ENCODE measurements at regions of chr5 and their contacts with region 1.

Region 1: GRCh38 chr5:35777358-35778087 is 79.2 kb upstream of the IL7R start:
- DNase-seq: peak; percentile 91
- H3K4me3 ChIP-seq: no peak overlapping the region
- H3K27ac ChIP-seq: no peak overlapping the region
- H3K4me1 ChIP-seq: peaks cover 21% of the 10 kb centered on the region
- CTCF ChIP-seq: peak; percentile 85

Region 2: GRCh38 chr5:35089334-35090314 is 687.9 kb before region 1 on chr5:
- CTCF ChIA-PET with region 1: no interaction called
- POLR2A ChIA-PET with region 1: no interaction called
- intact Hi-C with region 1: loop called (anchors 10 kb)
- DNase-seq: peak; percentile 56
- H3K4me3 ChIP-seq: no peak overlapping the region
- H3K27ac ChIP-seq: no peak overlapping the region
- H3K4me1 ChIP-seq: no peaks in the 10 kb centered on the region
- CTCF ChIP-seq: peak; percentile 86

Region 3: GRCh38 chr5:35651002-35651756 is 126.3 kb before region 1 on chr5:
- CTCF ChIA-PET with region 1: interaction called, 3 read pairs
- POLR2A ChIA-PET with region 1: no interaction called
- intact Hi-C with region 1: loop called (anchors 1 kb)
- DNase-seq: peak; percentile 83
- H3K4me3 ChIP-seq: no peak overlapping the region
- H3K27ac ChIP-seq: no peak overlapping the region
- H3K4me1 ChIP-seq: peaks cover 20% of the 10 kb centered on the region
- CTCF ChIP-seq: peak; percentile 90

Region 4: GRCh38 chr5:35753490-35753889 is 24.0 kb before region 1 on chr5:
- CTCF ChIA-PET with region 1: no interaction called
- POLR2A ChIA-PET with region 1: interaction called, 12 read pairs
- intact Hi-C with region 1: no loop called
- DNase-seq: no peak
- H3K4me3 ChIP-seq: no peak overlapping the region
- H3K27ac ChIP-seq: no peak overlapping the region
- H3K4me1 ChIP-seq: peaks cover 3% of the 10 kb centered on the region
- CTCF ChIP-seq: no peak

Region 5: DNA sequence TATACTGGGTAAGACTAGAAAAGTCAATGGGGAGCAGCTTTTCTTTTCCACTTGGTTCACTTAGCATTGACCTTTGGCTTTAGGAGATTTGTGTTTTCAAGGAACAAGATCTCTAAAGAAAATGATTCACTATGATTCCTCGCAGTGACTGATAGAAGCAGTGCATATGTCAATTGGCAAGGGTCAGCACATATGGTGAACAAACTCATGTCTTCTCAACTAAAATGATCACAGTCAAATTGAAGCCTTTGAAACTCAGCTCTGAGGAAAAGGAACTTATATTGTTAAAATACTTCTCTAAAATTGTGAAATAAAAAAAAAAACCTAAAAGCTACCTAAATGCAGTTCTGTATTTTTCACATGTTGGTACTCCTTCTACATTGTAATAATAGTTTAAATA is 36.0 kb after region 1 on chr5:
- CTCF ChIA-PET with region 1: no interaction called
- POLR2A ChIA-PET with region 1: interaction called, 10 read pairs
- intact Hi-C with region 1: no loop called
- DNase-seq: no peak
- H3K4me3 ChIP-seq: no peak overlapping the region
- H3K27ac ChIP-seq: no peak overlapping the region
- H3K4me1 ChIP-seq: peaks cover 6% of the 10 kb centered on the region
- CTCF ChIP-seq: no peak

Region 6: DNA sequence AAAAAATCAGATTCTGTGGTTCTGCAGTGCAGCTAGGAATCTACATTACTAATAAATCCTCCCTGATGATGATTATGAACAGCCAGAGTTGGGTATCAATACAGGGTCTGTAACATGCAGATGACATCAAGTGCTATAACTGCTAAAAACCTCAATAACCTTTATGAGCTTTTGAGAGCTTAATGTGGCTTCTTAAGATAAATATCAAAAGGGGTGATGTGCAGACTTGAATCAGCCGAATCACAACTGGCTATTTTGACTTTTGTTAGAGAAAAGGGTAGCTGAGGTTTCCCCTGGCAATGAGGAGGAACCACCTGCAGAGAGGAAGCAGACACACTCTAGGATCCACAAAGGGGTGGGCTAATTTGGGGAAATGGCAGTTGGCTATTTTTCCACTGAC is 130.7 kb after region 1 on chr5:
- CTCF ChIA-PET with region 1: no interaction called
- POLR2A ChIA-PET with region 1: interaction called, 10 read pairs
- intact Hi-C with region 1: no loop called
- DNase-seq: peak; percentile 93
- H3K4me3 ChIP-seq: peak overlapping the region; percentile 26
- H3K27ac ChIP-seq: peak overlapping the region; percentile 98
- H3K4me1 ChIP-seq: peaks cover 72% of the 10 kb centered on the region
- CTCF ChIP-seq: no peak

Region 7: DNA sequence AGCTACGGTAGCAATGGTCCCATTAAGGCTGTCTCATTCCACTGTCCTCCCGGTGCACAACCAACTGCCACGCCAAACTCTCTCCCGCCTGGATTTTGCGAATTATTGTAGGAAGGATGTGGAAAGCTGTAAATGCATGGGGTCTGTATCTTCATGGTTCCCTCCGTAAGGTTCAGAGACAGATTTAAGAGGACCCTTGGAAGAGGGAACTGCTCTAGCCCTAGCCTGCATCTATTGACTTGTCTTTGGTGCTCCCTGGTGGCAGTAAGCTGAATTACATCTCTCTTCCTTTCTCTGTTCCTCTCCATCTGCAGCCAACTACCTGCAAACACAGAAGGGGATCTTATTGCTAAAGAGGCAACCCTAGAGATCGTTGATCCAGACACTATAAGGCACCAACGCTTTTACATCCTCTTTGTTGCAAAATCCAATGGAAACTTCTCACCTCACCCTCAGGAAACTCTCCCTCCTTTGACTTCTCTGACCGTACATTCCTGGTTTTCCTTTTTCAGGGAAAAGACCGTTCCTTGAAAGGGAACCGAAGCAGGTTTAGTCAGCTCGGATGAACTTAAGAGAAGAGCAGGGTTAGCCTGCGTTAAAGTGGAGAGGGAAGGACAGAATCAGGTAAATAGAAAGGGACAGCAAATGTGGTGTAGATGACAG is 149.0 kb after region 1 on chr5:
- CTCF ChIA-PET with region 1: interaction called, 31 read pairs
- POLR2A ChIA-PET with region 1: interaction called, 11 read pairs
- intact Hi-C with region 1: loop called (anchors 1 kb)
- DNase-seq: peak; percentile 80
- H3K4me3 ChIP-seq: no peak overlapping the region
- H3K27ac ChIP-seq: no peak overlapping the region
- H3K4me1 ChIP-seq: peaks cover 39% of the 10 kb centered on the region
- CTCF ChIP-seq: peak; percentile 93